PC-3 (cell line): ENCODE measurements at regions of chr11 and their contacts with region 1.

Region 1: GRCh38 chr11:95364324-95365295 is 133.6 kb upstream of the SESN3 start:
- DNase-seq: peak; percentile 73
- ATAC-seq: peak; percentile 98
- H3K4me3 ChIP-seq: no peak overlapping the region
- H3K27ac ChIP-seq: no peak overlapping the region
- H3K4me1 ChIP-seq: peaks cover 11% of the 10 kb centered on the region
- H3K27me3 ChIP-seq: peaks cover 35% of the 10 kb centered on the region; the same call in 1 of the 2 replicates
- CTCF ChIP-seq: no peak

Region 2: GRCh38 chr11:95182397-95182796 is 182.2 kb before region 1 on chr11:
- CTCF ChIA-PET with region 1: no interaction called
- POLR2A ChIA-PET with region 1: no interaction called
- intact Hi-C with region 1: loop called (anchors 10 kb)
- DNase-seq: no peak
- ATAC-seq: no peak
- H3K4me3 ChIP-seq: no peak overlapping the region
- H3K27ac ChIP-seq: no peak overlapping the region
- H3K4me1 ChIP-seq: no peaks in the 10 kb centered on the region
- H3K27me3 ChIP-seq: peaks cover 32% of the 10 kb centered on the region
- CTCF ChIP-seq: no peak

Region 3: GRCh38 chr11:95335989-95336388 is 28.6 kb before region 1 on chr11:
- CTCF ChIA-PET with region 1: no interaction called
- POLR2A ChIA-PET with region 1: no interaction called
- intact Hi-C with region 1: no loop called
- DNase-seq: no peak
- ATAC-seq: no peak
- H3K4me3 ChIP-seq: no peak overlapping the region
- H3K27ac ChIP-seq: no peak overlapping the region
- H3K4me1 ChIP-seq: no peaks in the 10 kb centered on the region
- H3K27me3 ChIP-seq: peaks cover 36% of the 10 kb centered on the region
- CTCF ChIP-seq: no peak

Region 4: GRCh38 chr11:95419915-95420314 is 55.3 kb after region 1 on chr11:
- CTCF ChIA-PET with region 1: no interaction called
- POLR2A ChIA-PET with region 1: no interaction called
- intact Hi-C with region 1: no loop called
- DNase-seq: peak; percentile 33
- ATAC-seq: no peak
- H3K4me3 ChIP-seq: no peak overlapping the region
- H3K27ac ChIP-seq: no peak overlapping the region
- H3K4me1 ChIP-seq: no peaks in the 10 kb centered on the region
- H3K27me3 ChIP-seq: peaks cover 1% of the 10 kb centered on the region; the same call in 1 of the 2 replicates
- CTCF ChIP-seq: no peak